ENCODE measurements at regions of chr1 and their contacts with region 1.

Region 1: DNA sequence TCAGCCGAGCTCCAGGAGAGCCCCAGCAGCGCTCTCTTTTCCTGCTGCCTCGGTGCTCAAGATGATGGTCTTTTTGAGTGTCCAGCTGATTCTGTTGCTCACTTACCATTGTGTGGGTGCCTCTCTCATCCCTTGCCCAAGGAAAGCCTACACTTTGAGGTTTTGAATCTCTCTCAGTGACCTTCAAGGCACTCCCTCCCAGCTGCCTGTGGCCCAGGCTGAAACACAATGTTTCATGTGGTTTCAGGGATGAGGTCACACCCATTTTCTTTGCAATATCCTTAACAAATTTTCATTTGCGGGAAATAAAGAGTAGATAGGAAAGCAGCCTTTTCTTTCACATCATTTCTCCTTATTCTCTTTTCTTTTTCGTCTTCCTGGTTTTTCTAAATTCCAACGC is 12.6 kb upstream of the MRPS14 start:
- DNase-seq: no peak
- ATAC-seq: no peak

Region 2: DNA sequence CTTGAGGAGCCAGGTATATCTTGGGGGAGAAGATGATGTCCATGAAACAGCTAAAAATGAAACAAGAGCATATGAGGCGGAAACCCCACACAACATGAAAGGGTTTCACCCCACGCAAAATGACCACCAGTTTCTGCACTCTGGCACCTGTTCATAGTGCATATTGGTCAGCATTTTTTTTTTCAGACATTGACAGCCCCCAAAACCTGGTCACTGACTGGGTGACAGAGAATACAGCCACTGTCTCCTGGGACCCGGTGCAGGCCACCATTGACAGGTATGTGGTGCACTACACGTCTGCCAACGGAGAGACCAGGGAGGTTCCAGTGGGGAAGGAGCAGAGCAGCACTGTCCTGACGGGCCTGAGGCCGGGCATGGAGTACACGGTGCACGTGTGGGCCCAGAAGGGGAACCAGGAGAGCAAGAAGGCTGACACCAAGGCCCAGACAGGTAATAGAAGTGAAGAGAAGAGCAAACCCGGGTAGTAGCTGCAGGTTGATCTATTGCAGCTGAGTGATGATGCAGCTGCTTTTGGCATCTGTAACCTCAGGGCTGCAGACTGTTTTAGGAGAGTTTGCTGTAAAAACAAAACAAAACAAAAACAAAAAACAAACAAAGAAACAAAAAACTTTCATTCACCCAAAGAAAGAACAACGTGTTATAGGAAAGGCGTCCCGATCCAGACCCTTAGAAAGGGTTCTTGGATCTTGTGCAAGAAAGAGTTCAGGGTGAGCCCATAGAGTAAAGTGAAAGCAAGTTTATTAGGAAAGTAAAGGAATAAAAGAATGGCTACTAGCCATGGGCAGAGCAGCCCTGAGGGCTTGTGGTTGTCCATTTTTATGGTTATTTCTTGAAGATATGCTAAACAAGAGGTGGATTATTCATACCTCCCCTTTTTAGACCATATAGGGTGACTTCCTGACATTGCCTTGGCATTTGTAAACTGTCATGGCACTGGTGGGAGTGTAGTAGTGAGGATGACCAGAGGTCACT is 82.8 kb after region 1 on chr1:
- intact Hi-C with region 1: loop called in 1 of 2 experiments (anchors 5 kb)
- DNase-seq: no peak
- ATAC-seq: no peak

Region 3: GRCh38 chr1:175124861-175125260 is 89.0 kb after region 1 on chr1:
- intact Hi-C with region 1: loop called in 1 of 2 experiments (anchors 2 kb)
- DNase-seq: no peak
- ATAC-seq: no peak

Region 4: DNA sequence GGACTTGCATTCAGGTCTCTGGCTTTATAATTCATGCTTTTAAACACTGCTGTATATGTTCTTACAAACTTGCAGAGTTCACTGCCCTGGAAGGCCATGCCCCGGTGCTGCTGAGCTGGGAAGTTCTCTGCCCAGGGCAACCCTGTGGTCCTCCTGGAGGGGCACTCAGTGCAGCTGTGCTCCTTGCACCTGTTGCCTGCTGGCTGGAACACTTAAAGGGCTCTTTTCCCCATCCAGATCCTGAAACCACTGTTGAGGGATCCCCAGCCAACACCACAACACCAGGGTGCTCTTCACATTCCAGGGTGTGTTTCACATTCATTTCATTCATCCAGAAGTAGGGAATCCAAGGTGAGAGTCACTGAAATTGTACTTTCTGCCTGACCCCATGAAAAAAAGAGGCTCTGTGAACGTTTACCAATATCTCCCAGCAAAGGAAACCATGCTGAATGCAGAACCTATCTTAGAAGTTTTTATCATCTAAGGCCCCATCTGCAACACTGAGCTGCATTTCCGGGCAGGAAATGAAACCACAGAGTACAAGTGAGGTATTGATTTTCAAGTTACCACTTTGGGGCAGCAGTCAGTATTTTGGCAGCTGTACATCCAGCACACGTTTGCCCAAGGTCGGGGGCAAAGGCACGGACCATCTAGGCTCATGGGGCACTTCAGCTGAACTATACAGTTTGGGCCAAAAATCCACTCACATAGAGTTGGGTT is 173.1 kb after region 1 on chr1:
- intact Hi-C with region 1: no loop called
- DNase-seq: no peak
- ATAC-seq: peak; percentile 17 to 63

Region 5: DNA sequence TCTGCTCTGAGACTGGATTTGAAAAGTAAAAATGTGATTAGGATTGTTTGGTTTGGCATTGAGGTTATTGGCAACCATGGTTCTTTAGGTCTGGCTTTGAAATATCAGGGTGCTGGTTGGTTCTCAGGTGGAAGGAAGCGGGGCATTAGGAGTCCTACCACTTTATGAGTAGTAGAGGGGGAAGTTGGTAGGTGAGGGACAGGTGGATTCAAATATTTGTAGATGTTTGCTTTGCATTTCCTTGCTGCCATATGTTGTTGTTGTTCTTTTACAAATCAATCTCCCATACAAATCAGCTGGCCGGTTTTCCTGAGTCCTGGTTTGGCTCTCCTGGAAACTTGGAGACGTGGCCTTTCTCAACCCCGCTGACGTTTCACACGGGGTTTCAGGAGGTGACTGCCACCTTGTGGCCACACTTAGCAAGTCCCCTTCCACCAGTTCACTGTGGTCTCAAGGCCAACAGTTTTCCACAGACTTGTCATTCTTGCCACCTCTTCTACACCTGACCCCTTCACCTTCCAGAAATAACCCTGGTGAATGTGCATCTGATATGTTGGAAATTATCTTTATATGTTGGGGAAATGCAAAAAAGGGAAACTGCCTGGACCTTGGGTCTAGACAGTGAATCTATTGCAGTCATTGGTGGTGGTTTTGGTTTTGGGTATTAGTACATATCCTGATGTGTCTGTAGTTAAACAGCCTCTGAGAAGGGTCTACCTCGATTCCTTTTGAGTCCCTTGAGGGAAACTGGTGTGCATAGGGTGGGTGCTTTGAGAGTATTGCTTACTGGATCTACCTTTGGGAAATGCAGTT is 283.8 kb after region 1 on chr1:
- intact Hi-C with region 1: loop called in 1 of 2 experiments (anchors 10 kb)
- DNase-seq: peak; percentile 84
- ATAC-seq: peak; percentile 84 to 88

Measured in left cardiac atrium (tissue), 4 donors.